Activated T-helper 1 cell treated with anti-CD3 and anti-CD28 coated beads, Interleukin-12 subunit alpha, Interleukin-12 subunit beta, Interleukin-2, Interleukin-4 antibody, amounts not matched to agents 30 ng/mL and 10 ng/mL and 1 ng/mL, durations not matched to agents 14 hours and 24 hours and 36 hours (primary cell): ENCODE measurements at regions of chr17 and their contacts with region 1.

Region 1: GRCh38 chr17:75109407-75110233 is at the start of gene ARMC7:
- DNase-seq: peak; percentile 93
- H3K4me3 Mint-ChIP-seq: peak within 1 kb of the TSS; percentile 93
- H3K27ac Mint-ChIP-seq: peak within 1 kb of the TSS; percentile 84
- H3K4me1 Mint-ChIP-seq: peaks cover 36% of the 10 kb centered on the region
- H3K27me3 Mint-ChIP-seq: no peaks in the 10 kb centered on the region
- total RNA-seq, gene ARMC7: 11.6 and 13.0 TPM in 2 replicates

Region 2: DNA sequence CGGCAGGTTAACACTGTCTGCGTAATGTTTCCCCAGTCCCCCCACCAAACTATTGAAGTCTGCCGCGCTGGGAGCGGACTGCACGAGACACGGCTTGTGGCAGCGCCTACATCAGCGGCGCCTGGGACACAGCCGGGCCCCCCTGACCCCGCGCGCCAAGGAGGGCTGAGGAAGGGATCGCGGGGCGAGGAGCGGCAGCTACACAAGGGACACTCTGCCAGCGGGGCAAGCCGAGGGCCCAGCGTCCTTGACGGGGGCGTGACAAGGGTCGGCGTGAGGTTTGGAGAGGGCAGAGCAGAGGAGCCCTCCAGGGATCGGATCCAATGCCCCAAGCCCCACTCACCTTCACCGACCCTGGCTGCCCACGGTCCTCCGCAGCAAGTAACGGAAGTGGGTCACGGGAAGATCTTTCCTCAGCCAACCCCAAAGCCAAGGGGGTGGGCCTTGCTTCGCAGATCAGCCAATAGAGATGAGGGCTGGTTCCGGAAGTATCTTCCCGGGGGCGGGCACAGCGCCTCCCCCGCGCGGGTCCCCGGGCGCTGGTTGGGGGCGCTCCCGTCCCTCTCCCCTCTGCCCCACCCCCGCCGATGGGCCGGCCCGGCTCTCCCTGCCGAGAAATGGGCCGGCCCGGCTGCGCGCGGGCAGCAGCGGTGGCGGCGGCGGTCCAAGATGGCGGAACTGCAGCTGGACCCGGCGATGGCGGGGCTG is 62.9 kb before region 1 on chr17 and contains the starts of genes ATP5PD and KCTD2:
- intact Hi-C with region 1: loop called (anchors 1 kb)
- DNase-seq: peak; percentile 93
- H3K4me3 Mint-ChIP-seq: peak within 1 kb of the TSS; percentile 100
- H3K27ac Mint-ChIP-seq: peak within 1 kb of the TSS; percentile 98
- H3K4me1 Mint-ChIP-seq: peaks cover 35% of the 10 kb centered on the region
- H3K27me3 Mint-ChIP-seq: no peaks in the 10 kb centered on the region
- total RNA-seq, gene ATP5PD: 152 and 165 TPM in 2 replicates
- total RNA-seq, gene KCTD2: 21.2 and 22.6 TPM in 2 replicates

Region 3: DNA sequence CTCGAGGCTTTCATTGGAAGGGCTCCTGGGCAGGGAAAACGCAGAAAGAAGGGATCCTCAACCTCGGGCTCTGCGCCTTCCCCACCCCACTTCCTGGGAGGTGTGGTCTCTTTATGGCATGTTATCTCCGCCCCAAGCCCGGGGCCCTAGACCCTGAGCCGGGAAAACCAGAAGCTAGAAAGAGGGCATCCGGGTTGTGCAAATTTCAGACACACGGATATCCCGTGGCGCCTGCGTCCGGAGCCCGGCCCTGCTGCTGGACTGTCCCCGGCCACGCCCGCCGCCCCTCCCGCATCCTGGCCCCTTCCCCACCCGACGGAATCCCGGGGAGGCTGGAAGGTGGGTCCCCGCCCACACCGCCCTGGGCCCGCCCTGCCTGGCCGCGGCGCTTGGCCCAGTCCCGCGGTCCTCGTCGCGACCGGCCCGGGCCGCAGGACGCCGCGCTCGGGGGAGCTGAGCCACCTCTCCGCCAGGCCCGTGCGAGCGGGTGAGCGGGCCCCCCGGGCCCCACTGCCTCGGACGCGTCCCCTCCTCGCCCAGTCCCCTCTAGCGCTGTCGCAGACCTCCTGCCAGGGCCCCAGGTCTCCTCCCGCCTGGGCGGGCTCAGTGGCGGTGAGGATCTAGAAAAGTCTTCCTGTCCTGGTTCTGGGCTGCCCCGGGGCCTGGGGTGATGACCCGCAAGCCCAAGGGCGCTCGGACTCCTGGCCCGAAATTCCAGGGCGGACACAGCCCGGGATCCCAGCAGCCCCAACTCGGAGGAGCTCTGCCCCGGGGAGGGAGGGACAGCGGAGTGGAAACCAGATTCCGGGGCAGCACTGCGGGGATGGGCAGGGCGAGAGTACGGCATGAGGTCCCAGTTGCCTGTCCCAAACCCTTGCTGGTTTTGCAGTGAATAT is 21.8 kb before region 1 on chr17 and contains the start of gene SLC16A5:
- intact Hi-C with region 1: loop called (anchors 1 kb)
- DNase-seq: peak; percentile 49
- H3K4me3 Mint-ChIP-seq: peak within 1 kb of the TSS; percentile 80
- H3K27ac Mint-ChIP-seq: peak within 1 kb of the TSS; percentile 59
- H3K4me1 Mint-ChIP-seq: peaks cover 33% of the 10 kb centered on the region
- H3K27me3 Mint-ChIP-seq: no peaks in the 10 kb centered on the region
- total RNA-seq, gene SLC16A5: 5.5 and 7.2 TPM in 2 replicates

Region 4: DNA sequence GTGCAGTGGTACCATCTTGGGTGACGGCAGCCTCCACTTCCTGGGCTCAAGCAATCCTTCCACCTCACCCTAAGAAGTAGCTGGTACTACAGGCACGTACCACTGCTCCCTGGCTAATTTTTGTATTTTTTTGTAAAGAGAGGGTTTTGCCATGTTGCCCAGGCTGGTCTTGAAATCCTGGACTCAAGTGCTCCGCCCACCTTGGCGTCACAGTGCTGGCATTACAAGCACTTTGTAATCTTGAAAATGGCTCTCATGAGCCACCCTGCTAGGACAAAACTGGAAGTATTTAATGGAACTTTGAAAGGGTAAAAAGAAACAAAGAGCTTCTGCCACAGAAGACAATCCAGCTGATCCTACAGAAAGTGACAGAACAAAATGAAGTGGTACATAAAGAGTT is 63.9 kb after region 1 on chr17:
- intact Hi-C with region 1: loop called (anchors 1 kb)
- DNase-seq: no peak
- H3K4me3 Mint-ChIP-seq: no peak overlapping the region
- H3K27ac Mint-ChIP-seq: no peak overlapping the region
- H3K4me1 Mint-ChIP-seq: peaks cover 20% of the 10 kb centered on the region
- H3K27me3 Mint-ChIP-seq: no peaks in the 10 kb centered on the region

Region 5: DNA sequence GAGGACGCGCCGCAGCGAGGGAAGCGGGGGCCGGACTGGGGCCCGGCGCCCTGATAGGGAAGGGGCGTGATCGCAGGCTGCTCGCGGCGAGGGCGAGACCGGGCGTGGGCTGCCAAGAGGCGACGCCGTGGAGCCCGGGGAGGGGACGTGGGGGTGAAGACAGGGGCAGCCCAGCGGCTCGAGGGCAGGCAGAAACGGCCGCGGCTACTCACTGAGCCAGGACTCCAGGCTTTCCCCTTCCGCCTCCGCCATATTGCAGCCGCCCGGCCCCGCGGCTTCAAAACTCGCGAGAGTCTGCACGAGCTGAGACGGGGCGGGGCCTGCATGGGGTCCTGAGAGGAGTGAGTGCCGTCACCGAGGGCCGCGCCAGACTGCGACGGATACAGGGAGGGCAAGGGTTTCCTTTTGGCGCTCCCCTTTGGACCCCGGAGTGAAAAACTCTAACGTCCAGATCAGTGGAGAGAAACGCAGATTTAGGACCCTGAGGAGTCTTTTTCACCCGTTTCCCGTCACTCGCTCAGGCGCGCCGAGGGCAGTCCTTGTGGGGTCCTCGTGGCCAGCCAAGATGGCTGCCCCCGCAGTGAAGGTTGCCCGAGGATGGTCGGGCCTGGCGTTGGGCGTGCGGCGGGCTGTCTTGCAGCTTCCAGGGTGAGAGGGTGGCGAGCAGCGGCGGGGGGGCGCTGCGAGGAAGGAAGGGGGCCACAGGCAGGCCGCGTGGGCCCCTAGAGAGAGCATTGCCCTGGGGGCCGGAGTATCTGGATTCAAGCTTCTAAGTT is 151.9 kb after region 1 on chr17 and contains the starts of genes GGA3 and MRPS7:
- intact Hi-C with region 1: loop called (anchors 5 kb)
- DNase-seq: peak; percentile 94
- H3K4me3 Mint-ChIP-seq: peak within 1 kb of the TSS; percentile 96
- H3K27ac Mint-ChIP-seq: peak within 1 kb of the TSS; percentile 97
- H3K4me1 Mint-ChIP-seq: peaks cover 49% of the 10 kb centered on the region
- H3K27me3 Mint-ChIP-seq: no peaks in the 10 kb centered on the region
- total RNA-seq, gene GGA3: 93.4 and 94.3 TPM in 2 replicates
- total RNA-seq, gene MRPS7: 126 and 130 TPM in 2 replicates